ENCODE measurements at regions of chr7 and their contacts with region 1.

Region 1: GRCh38 chr7:39446546-39446945 is 119.7 kb upstream of the YAE1 start:
- DNase-seq: no peak
- ATAC-seq: no peak
- H3K4me3 ChIP-seq: no peak overlapping the region
- H3K27ac ChIP-seq: no peak overlapping the region
- H3K4me1 ChIP-seq: no peaks in the 10 kb centered on the region
- H3K27me3 ChIP-seq: peaks cover 0 to 36% (median 3%) of the 10 kb centered on the region in 9 donors
- CTCF ChIP-seq: no peak
- POLR2A ChIP-seq: no peak

Region 2: DNA sequence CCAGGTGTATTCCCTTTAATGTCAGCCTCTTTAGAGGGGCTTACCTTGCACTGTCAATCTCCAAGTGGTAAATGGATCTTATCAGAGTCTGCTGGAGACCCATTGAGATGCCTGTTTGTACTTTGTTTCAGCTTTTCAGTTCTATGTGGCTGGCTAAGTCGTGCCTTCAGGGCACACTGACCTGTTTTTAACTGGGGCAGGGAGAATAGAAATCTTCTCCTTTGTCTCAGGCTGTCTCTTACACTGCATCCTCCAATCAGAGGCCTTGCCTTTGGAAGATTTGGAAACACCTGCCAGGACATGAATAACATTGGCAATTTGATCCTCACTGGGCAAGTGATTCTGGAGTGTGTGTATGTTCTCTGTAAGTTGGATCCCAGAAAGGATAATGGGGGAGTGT is 403.9 kb before region 1 on chr7:
- intact Hi-C with region 1: no loop called
- DNase-seq: no peak
- ATAC-seq: no peak
- H3K4me3 ChIP-seq: no peak overlapping the region
- H3K27ac ChIP-seq: no peak overlapping the region
- H3K4me1 ChIP-seq: no peaks in the 10 kb centered on the region
- H3K27me3 ChIP-seq: peaks cover 0 to 3% (median 0%) of the 10 kb centered on the region in 9 donors
- CTCF ChIP-seq: no peak
- POLR2A ChIP-seq: no peak

Region 3: GRCh38 chr7:39493934-39494333 is 47.4 kb after region 1 on chr7:
- intact Hi-C with region 1: loop called in 1 of 10 experiments (anchors 10 kb)
- DNase-seq: no peak
- ATAC-seq: no peak
- H3K4me3 ChIP-seq: no peak overlapping the region
- H3K27ac ChIP-seq: no peak overlapping the region
- H3K4me1 ChIP-seq: no peaks in the 10 kb centered on the region
- H3K27me3 ChIP-seq: peaks cover 0 to 2% (median 0%) of the 10 kb centered on the region in 9 donors
- CTCF ChIP-seq: no peak
- POLR2A ChIP-seq: no peak

Measured in heart left ventricle (tissue), 16 donors.